Common myeloid progenitor, CD34-positive (primary cell): ENCODE measurements at regions of chr10 and their contacts with region 1.

Region 1: DNA sequence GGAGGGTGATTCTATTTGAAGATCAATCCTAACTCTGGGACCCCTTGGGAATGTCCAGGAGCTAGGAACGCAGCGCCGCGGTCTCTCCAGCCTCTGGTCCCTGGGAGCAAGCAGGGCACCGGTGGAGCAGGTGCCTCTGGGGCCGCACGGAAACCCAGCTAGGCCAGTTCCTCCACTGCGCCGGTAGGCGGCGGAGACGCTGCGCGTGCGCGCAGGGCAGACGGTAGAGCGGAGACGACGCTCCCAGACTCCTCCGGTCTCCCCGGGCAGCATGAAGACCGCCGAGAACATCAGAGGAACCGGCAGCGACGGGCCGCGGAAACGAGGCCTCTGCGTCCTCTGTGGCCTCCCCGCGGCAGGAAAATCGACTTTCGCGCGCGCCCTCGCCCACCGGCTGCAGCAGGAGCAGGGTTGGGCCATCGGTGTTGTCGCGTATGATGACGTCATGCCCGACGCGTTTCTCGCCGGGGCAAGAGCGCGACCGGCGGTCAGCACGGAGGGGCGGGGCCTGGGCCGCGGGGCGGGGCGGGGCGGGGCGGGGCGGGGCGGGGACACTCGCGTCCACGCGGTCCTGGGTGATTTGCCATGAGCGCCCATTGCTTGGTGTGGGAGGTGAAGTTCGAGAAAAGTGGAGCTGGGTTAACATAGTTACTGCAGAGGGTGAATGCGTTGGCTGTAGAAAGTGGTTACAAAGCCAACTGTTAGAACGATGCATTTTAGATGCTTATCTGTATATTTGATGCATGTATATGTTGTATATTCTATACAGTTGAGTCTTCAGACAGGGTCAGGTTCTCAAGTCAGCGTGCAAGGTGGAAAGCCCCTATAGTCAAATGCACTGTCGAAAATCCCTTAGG is at the start of gene PSTK:
- DNase-seq: peak; percentile 94 to 96 (median 96)
- H3K4me3 ChIP-seq: peak within 1 kb of the TSS; percentile 65 to 90 (median 82)
- H3K27ac ChIP-seq: peak within 1 kb of the TSS; percentile 60 to 85
- H3K4me1 ChIP-seq: peaks cover 9 to 19% (median 14%) of the 10 kb centered on the region in 4 experiments
- H3K27me3 ChIP-seq: no peaks in the 10 kb centered on the region

Region 2: GRCh38 chr10:123008439-123009205 is 28.2 kb after region 1 on chr10 and contains the starts of genes ACADSB and IKZF5:
- CTCF ChIA-PET with region 1: interaction called, 32 read pairs
- POLR2A ChIA-PET with region 1: interaction called, 6 read pairs
- DNase-seq: peak; percentile 98 to 99 (median 99)
- H3K4me3 ChIP-seq: peak within 1 kb of the TSS; percentile 65 to 97 (median 93)
- H3K27ac ChIP-seq: peak within 1 kb of the TSS; percentile 76 to 92
- H3K4me1 ChIP-seq: peaks cover 10 to 31% (median 22%) of the 10 kb centered on the region in 4 experiments
- H3K27me3 ChIP-seq: no peaks in the 10 kb centered on the region